ENCODE measurements at regions of chr5 and their contacts with region 1.

Region 1: GRCh38 chr5:164504141-164504772 is 998.8 kb downstream of the MAT2B start:
- DNase-seq: no peak
- ATAC-seq: peak; percentile 58 to 59
- H3K4me3 ChIP-seq: no peak overlapping the region
- H3K27ac ChIP-seq: no peak overlapping the region
- H3K4me1 ChIP-seq: no peaks in the 10 kb centered on the region
- H3K27me3 ChIP-seq: no peaks in the 10 kb centered on the region
- CTCF ChIP-seq: peak; percentile 73

Region 2: GRCh38 chr5:164013077-164013670 is 491.1 kb before region 1 on chr5:
- intact Hi-C with region 1: loop called (anchors 10 kb)
- DNase-seq: no peak
- ATAC-seq: peak in 1 of 2 donors; percentile 76
- H3K4me3 ChIP-seq: no peak overlapping the region
- H3K27ac ChIP-seq: no peak overlapping the region
- H3K4me1 ChIP-seq: no peaks in the 10 kb centered on the region
- H3K27me3 ChIP-seq: no peaks in the 10 kb centered on the region
- CTCF ChIP-seq: peak; percentile 64

Region 3: GRCh38 chr5:164326219-164326618 is 178.0 kb before region 1 on chr5:
- intact Hi-C with region 1: no loop called
- DNase-seq: no peak
- ATAC-seq: no peak
- H3K4me3 ChIP-seq: no peak overlapping the region
- H3K27ac ChIP-seq: no peak overlapping the region
- H3K4me1 ChIP-seq: no peaks in the 10 kb centered on the region
- H3K27me3 ChIP-seq: no peaks in the 10 kb centered on the region
- CTCF ChIP-seq: no peak

Measured in lower lobe of right lung (tissue), 2 donors.